ENCODE measurements at regions of chr1 and their contacts with region 1.

Region 1: DNA sequence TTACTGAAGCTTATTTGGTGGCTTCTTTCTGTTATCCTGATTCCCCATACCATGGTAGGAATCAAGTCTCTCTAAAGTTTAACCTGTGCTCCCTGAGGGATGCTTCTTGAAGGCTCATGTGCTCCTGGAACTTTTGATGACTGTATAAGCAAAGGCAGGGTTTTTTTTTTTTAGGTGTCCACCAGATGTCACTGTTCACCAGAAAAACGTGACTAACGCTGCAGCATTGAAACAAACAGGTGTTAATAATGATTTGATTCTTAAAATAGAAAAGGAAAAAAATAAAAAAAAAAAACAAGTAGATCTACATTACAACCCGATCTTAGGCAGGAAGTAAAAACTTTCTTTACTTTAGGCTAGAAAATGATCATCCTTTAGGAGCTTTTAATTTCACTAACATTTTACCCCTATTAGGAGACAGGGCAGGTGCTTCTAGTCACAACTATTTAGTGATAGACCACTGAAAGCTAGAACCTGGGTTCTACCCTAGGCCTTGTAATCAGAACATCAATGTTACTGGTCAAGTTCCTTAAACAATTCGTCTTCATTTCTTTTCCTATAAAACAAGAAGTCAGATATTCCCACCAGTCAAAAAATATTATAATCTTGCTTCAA is 223.0 kb downstream of the PLA2G4A start:
- DNase-seq: peak; percentile 19
- ATAC-seq: peak; percentile 62; the same call in 2 of the 3 replicates
- H3K4me3 ChIP-seq: no peak overlapping the region
- H3K27ac ChIP-seq: no peak overlapping the region
- H3K4me1 ChIP-seq: no peaks in the 10 kb centered on the region
- H3K27me3 ChIP-seq: no peaks in the 10 kb centered on the region
- CTCF ChIP-seq: peak; percentile 60
- EP300 ChIP-seq: no peak
- POLR2A ChIP-seq: no peak
- RAD21 ChIP-seq: no peak

Region 2: DNA sequence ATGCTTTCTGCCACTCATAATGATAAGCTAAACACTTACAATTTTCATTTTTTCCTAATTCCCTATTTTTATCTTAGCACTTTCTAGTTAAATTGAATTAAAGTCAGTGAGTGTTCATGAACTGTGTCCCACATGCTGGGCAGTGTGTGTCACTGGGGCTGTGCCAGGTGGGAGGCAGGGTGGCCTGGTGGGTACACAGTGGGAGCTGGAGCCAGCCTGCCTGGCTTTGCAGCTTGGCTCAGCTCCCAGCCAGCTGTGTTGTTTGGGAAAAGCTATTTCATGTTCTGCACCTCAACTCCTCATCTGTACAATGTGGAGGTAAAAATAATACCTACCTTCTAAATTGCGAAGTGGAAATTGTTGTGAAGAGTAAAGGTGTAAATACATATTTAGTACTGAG is 15.4 kb after region 1 on chr1:
- CTCF ChIA-PET with region 1: no interaction called
- POLR2A ChIA-PET with region 1: no interaction called
- in situ Hi-C with region 1: no loop called
- intact Hi-C with region 1: no loop called
- DNase-seq: no peak
- ATAC-seq: no peak
- H3K4me3 ChIP-seq: no peak overlapping the region
- H3K27ac ChIP-seq: no peak overlapping the region
- H3K4me1 ChIP-seq: no peaks in the 10 kb centered on the region
- H3K27me3 ChIP-seq: no peaks in the 10 kb centered on the region
- CTCF ChIP-seq: no peak
- EP300 ChIP-seq: no peak
- POLR2A ChIP-seq: no peak
- RAD21 ChIP-seq: no peak

Region 3: GRCh38 chr1:187264995-187265602 is 213.4 kb after region 1 on chr1:
- CTCF ChIA-PET with region 1: no interaction called
- POLR2A ChIA-PET with region 1: no interaction called
- in situ Hi-C with region 1: no loop called
- intact Hi-C with region 1: loop called (anchors 10 kb)
- DNase-seq: peak; percentile 28
- ATAC-seq: peak; percentile 62
- H3K4me3 ChIP-seq: no peak overlapping the region
- H3K27ac ChIP-seq: no peak overlapping the region
- H3K4me1 ChIP-seq: no peaks in the 10 kb centered on the region
- H3K27me3 ChIP-seq: no peaks in the 10 kb centered on the region
- CTCF ChIP-seq: peak; percentile 45
- EP300 ChIP-seq: no peak
- POLR2A ChIP-seq: no peak
- RAD21 ChIP-seq: no peak

Measured in HepG2 (cell line).